Natural killer cell (primary cell): ENCODE measurements at regions of chr5 and their contacts with region 1.

Region 1: DNA sequence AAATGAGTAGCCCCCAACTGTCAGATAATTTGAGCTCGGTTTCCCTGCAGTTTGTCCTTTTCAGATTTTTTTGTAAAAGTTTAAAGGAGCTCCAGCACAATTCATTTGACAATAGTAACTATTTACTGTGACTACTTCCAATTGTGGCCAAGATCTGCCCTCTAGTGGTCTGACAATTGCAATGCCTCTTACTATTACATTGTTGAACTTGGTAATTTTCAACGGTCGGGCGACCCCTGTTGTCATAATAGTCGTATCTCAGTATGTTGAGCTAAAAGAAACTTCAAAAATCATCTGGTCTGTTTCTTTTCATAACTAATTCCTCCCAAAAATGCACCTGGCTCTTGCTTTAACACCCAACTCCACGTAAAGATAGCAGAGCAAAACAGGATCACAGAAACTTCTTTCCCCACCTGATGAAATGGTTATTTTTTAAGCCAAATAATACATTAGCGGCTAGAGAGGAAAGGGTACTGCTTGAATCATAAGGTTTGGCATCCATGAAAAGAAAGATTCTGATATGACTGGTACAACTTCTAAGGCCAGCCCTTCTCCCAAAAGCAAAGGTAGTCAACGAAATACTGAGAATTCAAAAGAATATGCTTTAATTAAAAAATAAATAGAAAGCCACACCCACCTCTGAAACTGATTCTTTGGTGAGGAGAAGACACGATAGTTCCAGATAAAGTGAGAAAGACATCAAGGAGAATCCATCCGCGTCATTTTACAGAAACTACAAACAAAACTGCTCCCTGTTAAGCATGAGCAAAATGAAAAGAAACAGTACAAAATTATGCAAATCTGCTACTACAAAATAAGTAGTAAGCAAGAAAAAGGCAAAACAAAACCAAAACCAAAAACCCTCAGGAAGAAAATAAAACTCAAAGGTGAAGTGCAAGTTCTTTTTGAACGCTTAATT is 76.9 kb upstream of the HTR4 start:
- DNase-seq: peak; percentile 29 to 86
- ATAC-seq: peak; percentile 96 to 99 (median 98)
- H3K4me3 ChIP-seq: peak overlapping the region; percentile 0
- H3K4me3 Mint-ChIP-seq: peak overlapping the region; percentile 54
- H3K27ac ChIP-seq: no peak overlapping the region
- H3K27ac Mint-ChIP-seq: no peak overlapping the region
- H3K4me1 ChIP-seq: peaks cover 4% of the 10 kb centered on the region
- H3K4me1 Mint-ChIP-seq: peaks cover 9 to 21% of the 10 kb centered on the region in 2 donors
- H3K27me3 ChIP-seq: no peaks in the 10 kb centered on the region
- H3K27me3 Mint-ChIP-seq: peaks cover 3 to 25% of the 10 kb centered on the region in 2 donors
- CTCF ChIP-seq: peak; percentile 94

Region 2: GRCh38 chr5:147857302-147858129 is 873.7 kb before region 1 on chr5:
- intact Hi-C with region 1: loop called (anchors 5 kb)
- DNase-seq: peak; percentile 30 to 58
- ATAC-seq: peak; percentile 69 to 82 (median 76)
- H3K4me3 ChIP-seq: no peak overlapping the region
- H3K4me3 Mint-ChIP-seq: no peak overlapping the region
- H3K27ac ChIP-seq: no peak overlapping the region
- H3K27ac Mint-ChIP-seq: no peak overlapping the region
- H3K4me1 ChIP-seq: no peaks in the 10 kb centered on the region
- H3K4me1 Mint-ChIP-seq: peaks cover 0 to 5% of the 10 kb centered on the region in 2 donors
- H3K27me3 ChIP-seq: no peaks in the 10 kb centered on the region
- H3K27me3 Mint-ChIP-seq: peaks cover 5 to 7% of the 10 kb centered on the region in 2 donors
- CTCF ChIP-seq: peak; percentile 86

Region 3: GRCh38 chr5:148179234-148179824 is 551.9 kb before region 1 on chr5:
- intact Hi-C with region 1: loop called (anchors 1 kb)
- DNase-seq: peak in 1 of 2 donors; percentile 69
- ATAC-seq: no peak
- H3K4me3 ChIP-seq: no peak overlapping the region
- H3K4me3 Mint-ChIP-seq: no peak overlapping the region
- H3K27ac ChIP-seq: no peak overlapping the region
- H3K27ac Mint-ChIP-seq: no peak overlapping the region
- H3K4me1 ChIP-seq: no peaks in the 10 kb centered on the region
- H3K4me1 Mint-ChIP-seq: no peaks in the 10 kb centered on the region
- H3K27me3 ChIP-seq: no peaks in the 10 kb centered on the region
- H3K27me3 Mint-ChIP-seq: peaks cover 0 to 8% of the 10 kb centered on the region in 2 donors
- CTCF ChIP-seq: peak; percentile 29

Region 4: GRCh38 chr5:148998174-148998797 is 267.1 kb after region 1 on chr5:
- intact Hi-C with region 1: loop called (anchors 1 kb)
- DNase-seq: peak in 1 of 2 donors; percentile 74
- ATAC-seq: peak; percentile 71 to 92 (median 86)
- H3K4me3 ChIP-seq: no peak overlapping the region
- H3K4me3 Mint-ChIP-seq: no peak overlapping the region
- H3K27ac ChIP-seq: no peak overlapping the region
- H3K27ac Mint-ChIP-seq: no peak overlapping the region
- H3K4me1 ChIP-seq: no peaks in the 10 kb centered on the region
- H3K4me1 Mint-ChIP-seq: peaks cover 4% of the 10 kb centered on the region in 2 donors
- H3K27me3 ChIP-seq: no peaks in the 10 kb centered on the region
- H3K27me3 Mint-ChIP-seq: peaks cover 11% of the 10 kb centered on the region in 2 donors
- CTCF ChIP-seq: peak; percentile 77

Region 5: DNA sequence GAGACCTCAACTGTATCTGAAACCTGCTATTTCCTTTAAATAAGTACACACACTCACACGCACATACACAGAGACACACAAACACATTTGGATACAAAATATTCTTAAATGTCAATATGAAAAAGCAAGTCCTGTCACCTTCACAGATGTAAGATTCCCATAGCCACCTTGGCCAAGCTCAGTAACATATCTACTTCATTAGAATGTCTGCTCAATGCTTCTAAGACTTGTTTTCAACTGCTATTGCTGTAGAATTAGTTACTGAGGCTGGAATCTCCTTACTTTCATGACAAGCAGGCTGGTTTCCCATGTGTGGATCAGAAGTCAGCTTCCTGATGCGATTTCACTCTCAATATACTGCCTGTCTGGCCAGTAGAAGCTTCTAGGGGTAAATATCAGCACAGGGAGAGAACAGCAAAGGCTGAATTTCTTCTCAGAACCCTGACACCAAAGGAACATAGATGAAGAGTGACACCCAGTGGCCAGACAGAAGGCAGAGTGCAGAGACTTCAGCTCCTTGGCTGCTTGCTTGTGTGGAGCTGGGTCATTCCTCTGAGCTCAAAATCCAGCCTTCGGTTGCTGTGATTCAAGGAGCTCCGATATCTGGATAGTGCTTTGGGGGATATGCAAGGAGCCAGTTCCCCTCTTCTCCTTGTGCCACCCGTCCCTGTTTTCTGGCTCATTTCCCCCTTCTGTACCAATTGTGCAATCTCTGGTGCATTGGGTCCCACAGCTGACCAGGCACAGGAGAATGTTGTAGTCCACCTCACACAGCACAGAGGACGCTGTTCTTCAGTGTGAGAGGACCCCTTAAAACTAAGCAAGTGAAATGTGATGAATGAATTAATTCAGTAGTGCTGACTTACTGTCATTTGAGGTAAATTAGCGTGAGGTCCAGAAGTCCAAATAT is 383.5 kb after region 1 on chr5:
- intact Hi-C with region 1: loop called (anchors 1 kb)
- DNase-seq: peak in 1 of 2 donors; percentile 55
- ATAC-seq: peak; percentile 53 to 81 (median 67)
- H3K4me3 ChIP-seq: no peak overlapping the region
- H3K4me3 Mint-ChIP-seq: no peak overlapping the region
- H3K27ac ChIP-seq: no peak overlapping the region
- H3K27ac Mint-ChIP-seq: no peak overlapping the region
- H3K4me1 ChIP-seq: no peaks in the 10 kb centered on the region
- H3K4me1 Mint-ChIP-seq: no peaks in the 10 kb centered on the region
- H3K27me3 ChIP-seq: no peaks in the 10 kb centered on the region
- H3K27me3 Mint-ChIP-seq: peaks cover 5 to 15% of the 10 kb centered on the region in 2 donors
- CTCF ChIP-seq: peak; percentile 46